ENCODE measurements at regions of chr10 and their contacts with region 1.

Region 1: GRCh38 chr10:4174197-4174596 is 389.2 kb upstream of the KLF6 start:
- DNase-seq: peak; percentile 42 to 52
- H3K4me3 ChIP-seq: no peak overlapping the region
- H3K4me3 Mint-ChIP-seq: no peak overlapping the region
- H3K27ac Mint-ChIP-seq: no peak overlapping the region
- H3K4me1 ChIP-seq: no peaks in the 10 kb centered on the region
- H3K4me1 Mint-ChIP-seq: no peaks in the 10 kb centered on the region
- H3K27me3 ChIP-seq: no peaks in the 10 kb centered on the region
- H3K27me3 Mint-ChIP-seq: peaks cover 4% of the 10 kb centered on the region
- CTCF ChIP-seq: peak; percentile 26 to 56

Region 2: DNA sequence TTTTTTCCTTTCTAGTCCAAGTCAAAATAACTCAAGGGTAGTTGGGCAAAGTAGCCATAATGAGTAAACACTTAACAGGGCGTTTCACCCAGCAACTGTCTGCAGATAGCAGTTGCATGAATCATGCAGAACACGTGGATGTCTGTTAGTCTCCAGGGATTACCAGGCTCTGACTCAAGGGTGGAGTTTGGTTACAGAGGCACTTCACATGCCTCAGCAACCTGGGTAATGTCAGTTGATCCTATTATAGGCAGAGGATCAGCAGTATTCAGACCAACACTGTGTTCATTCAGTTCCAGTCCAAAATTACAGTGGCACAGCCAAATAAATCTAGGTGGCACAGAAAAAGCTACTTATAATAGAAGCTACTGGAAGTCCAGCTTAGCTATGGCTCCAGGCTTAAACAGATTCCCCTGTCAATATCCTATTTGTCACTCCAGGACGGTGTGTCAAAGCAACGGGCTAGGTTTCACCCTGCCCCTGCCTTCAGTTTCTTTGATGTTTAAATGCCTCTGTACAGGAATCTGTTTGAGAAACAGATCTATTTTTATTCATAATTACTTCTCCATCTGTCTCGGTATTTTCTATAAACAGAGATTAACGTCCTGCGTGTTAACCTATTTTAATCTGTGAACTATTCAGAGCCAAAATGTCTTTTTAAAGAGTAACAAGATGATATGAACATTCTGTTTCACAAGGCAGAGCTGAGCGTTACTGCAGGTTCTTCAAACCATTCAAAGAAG is 489.1 kb after region 1 on chr10:
- CTCF ChIA-PET with region 1: no interaction called
- POLR2A ChIA-PET with region 1: no interaction called
- intact Hi-C with region 1: loop called (anchors 2 kb)
- DNase-seq: peak; percentile 79 to 87
- H3K4me3 ChIP-seq: no peak overlapping the region
- H3K4me3 Mint-ChIP-seq: peak overlapping the region; percentile 7
- H3K27ac Mint-ChIP-seq: peak overlapping the region; percentile 84
- H3K4me1 ChIP-seq: peaks cover 27% of the 10 kb centered on the region
- H3K4me1 Mint-ChIP-seq: peaks cover 10% of the 10 kb centered on the region
- H3K27me3 ChIP-seq: no peaks in the 10 kb centered on the region
- H3K27me3 Mint-ChIP-seq: no peaks in the 10 kb centered on the region
- CTCF ChIP-seq: no peak